Activated CD4-positive, alpha-beta memory T cell treated with anti-CD3 and anti-CD28 coated beads for 36 hours (primary cell): ENCODE measurements at regions of chr6 and their contacts with region 1.

Region 1: DNA sequence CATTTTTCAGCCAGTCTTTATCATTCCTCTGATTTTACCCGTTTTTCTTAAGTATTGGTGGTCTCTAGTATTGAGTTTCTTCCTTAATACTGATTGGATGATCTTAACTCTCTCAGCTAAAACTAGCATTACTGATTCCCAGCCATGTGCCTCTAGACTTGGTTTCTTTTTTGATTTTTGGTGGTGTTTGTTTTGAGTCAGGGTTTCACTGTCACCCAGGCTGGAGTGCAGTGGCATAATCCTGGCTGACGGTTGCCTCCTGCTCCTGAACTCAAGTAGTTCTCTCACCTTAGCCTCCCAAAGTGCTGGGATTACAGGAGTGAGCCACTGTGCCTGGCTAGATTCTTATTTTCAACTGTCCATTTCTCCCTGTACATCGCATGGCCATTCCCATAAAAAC is 24.9 kb downstream of the DPPA5 start:
- DNase-seq: peak; percentile 30
- H3K4me3 Mint-ChIP-seq: no peak overlapping the region
- H3K27ac Mint-ChIP-seq: no peak overlapping the region
- H3K4me1 Mint-ChIP-seq: peaks cover 7% of the 10 kb centered on the region
- H3K27me3 Mint-ChIP-seq: peaks cover 8% of the 10 kb centered on the region

Region 2: GRCh38 chr6:72616406-72617015 is 712.7 kb before region 1 on chr6:
- CTCF ChIA-PET with region 1: interaction called, 10 read pairs
- POLR2A ChIA-PET with region 1: no interaction called
- intact Hi-C with region 1: no loop called
- DNase-seq: no peak
- H3K4me3 Mint-ChIP-seq: no peak overlapping the region
- H3K27ac Mint-ChIP-seq: no peak overlapping the region
- H3K4me1 Mint-ChIP-seq: peaks cover 43% of the 10 kb centered on the region
- H3K27me3 Mint-ChIP-seq: peaks cover 2% of the 10 kb centered on the region

Region 3: GRCh38 chr6:73180763-73181619 is 148.2 kb before region 1 on chr6:
- CTCF ChIA-PET with region 1: interaction called, 4 read pairs
- POLR2A ChIA-PET with region 1: no interaction called
- intact Hi-C with region 1: loop called (anchors 5 kb)
- DNase-seq: no peak
- H3K4me3 Mint-ChIP-seq: no peak overlapping the region
- H3K27ac Mint-ChIP-seq: no peak overlapping the region
- H3K4me1 Mint-ChIP-seq: no peaks in the 10 kb centered on the region
- H3K27me3 Mint-ChIP-seq: no peaks in the 10 kb centered on the region

Region 4: GRCh38 chr6:73285674-73286283 is 43.4 kb before region 1 on chr6:
- CTCF ChIA-PET with region 1: interaction called, 27 read pairs
- POLR2A ChIA-PET with region 1: no interaction called
- intact Hi-C with region 1: loop called (anchors 1 kb)
- DNase-seq: no peak
- H3K4me3 Mint-ChIP-seq: no peak overlapping the region
- H3K27ac Mint-ChIP-seq: no peak overlapping the region
- H3K4me1 Mint-ChIP-seq: no peaks in the 10 kb centered on the region
- H3K27me3 Mint-ChIP-seq: no peaks in the 10 kb centered on the region